A549 (cell line): ENCODE measurements at regions of chr17 and their contacts with region 1.

Region 1: DNA sequence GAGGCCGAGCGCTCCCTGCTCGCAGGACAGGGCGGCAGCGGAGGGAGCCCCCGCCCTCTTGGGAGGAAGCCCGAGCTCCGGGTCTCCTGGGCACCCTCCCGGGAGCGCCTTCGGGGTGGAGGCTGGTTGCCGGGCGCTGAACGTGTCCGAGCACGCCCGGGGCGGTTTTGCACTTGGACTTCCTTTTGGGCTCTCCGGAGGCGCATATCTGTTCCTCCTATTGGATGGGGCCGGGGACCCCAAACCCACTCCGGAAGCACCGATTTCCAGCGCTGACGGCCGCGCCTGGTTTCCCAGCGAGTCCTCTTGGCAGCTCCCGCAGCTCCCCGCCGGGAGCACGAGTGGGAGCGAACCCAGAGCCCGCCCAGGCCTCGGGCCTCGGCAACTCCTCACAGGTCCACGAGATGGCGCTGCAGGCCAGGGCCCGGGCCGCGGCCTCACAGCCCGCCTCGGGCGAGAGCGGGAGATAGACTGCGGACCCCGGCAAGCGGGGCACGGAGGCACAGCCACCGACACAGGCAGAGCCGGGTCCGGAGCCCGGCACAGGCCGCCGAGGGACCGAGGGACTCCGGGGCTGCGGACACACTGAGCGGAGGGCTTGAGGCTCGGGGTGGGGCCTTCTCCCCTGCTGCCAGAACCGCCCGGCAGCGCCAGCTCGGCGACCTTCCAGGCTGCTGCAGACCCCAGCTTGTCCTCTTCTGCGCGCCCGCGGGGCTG is 12.7 kb downstream of the TBX2 start:
- DNase-seq: peak; percentile 82 to 90
- ATAC-seq: peak; percentile 55 to 80
- H3K4me3 ChIP-seq: peak overlapping the region; percentile 58
- H3K27ac ChIP-seq: peak overlapping the region; percentile 85 to 91
- H3K4me1 ChIP-seq: peaks cover 15% of the 10 kb centered on the region
- CTCF ChIP-seq: peak; percentile 99
- EP300 ChIP-seq: no peak
- POLR2A ChIP-seq: peak; percentile 47
- RAD21 ChIP-seq: peak; percentile 98 to 100

Region 2: GRCh38 chr17:60971515-60972369 is 440.6 kb before region 1 on chr17:
- CTCF ChIA-PET with region 1: interaction called, 29 read pairs
- POLR2A ChIA-PET with region 1: no interaction called
- DNase-seq: peak; percentile 37 to 73
- ATAC-seq: peak; percentile 89 to 96
- H3K4me3 ChIP-seq: no peak overlapping the region
- H3K27ac ChIP-seq: no peak overlapping the region
- H3K4me1 ChIP-seq: peaks cover 7% of the 10 kb centered on the region; the same call in 1 of the 3 replicates
- CTCF ChIP-seq: peak; percentile 79
- EP300 ChIP-seq: no peak
- POLR2A ChIP-seq: no peak
- RAD21 ChIP-seq: peak; percentile 81 to 88

Region 3: DNA sequence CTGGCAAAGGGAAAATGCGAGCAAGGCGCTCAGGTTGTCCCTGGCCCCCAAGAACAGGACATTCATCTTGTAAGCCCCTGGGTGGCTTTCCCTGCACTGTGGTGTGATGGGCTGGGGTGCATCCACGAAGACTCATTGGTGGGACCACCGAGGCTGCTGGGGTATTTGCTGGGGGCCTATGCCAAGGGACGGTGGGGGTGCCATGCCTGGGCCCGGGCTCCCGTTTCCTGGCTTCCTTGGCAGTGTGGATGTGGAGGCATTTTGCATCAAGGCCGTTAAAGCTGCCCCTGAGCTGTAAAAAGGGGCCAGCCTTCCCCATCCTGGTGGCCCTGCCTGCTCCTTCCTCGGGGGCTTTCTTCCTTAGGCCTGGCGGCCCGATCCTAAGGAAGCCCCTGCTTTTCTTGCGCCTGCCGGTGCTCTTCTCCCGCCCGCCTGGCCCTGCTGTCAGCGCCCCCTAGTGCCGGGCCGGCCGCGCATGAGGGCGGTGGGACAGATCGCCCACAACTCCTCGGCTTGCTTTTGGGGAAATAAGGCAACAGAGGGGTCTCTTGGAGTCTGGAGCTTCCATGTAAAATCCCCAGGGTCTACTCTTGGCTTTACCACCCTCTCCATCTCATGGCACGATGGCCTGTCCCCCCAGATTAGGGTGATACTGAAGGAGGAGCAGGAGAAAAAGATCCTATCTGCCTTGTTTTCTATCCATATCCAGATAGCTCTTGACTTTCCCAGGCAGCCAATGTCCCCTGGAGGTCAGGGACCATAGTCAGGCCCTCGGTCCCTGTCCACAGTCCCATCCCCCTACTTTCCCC is 22.4 kb before region 1 on chr17:
- CTCF ChIA-PET with region 1: interaction called, 21 read pairs
- POLR2A ChIA-PET with region 1: no interaction called
- DNase-seq: peak; percentile 58 to 72
- ATAC-seq: peak; percentile 59 to 88
- H3K4me3 ChIP-seq: no peak overlapping the region
- H3K27ac ChIP-seq: peak overlapping the region; percentile 40 to 75; a peak in 5 of 6 replicates
- H3K4me1 ChIP-seq: peaks cover 7% of the 10 kb centered on the region; the same call in 2 of the 3 replicates
- CTCF ChIP-seq: peak; percentile 97
- EP300 ChIP-seq: no peak
- POLR2A ChIP-seq: no peak
- RAD21 ChIP-seq: peak; percentile 92 to 97

Region 4: DNA sequence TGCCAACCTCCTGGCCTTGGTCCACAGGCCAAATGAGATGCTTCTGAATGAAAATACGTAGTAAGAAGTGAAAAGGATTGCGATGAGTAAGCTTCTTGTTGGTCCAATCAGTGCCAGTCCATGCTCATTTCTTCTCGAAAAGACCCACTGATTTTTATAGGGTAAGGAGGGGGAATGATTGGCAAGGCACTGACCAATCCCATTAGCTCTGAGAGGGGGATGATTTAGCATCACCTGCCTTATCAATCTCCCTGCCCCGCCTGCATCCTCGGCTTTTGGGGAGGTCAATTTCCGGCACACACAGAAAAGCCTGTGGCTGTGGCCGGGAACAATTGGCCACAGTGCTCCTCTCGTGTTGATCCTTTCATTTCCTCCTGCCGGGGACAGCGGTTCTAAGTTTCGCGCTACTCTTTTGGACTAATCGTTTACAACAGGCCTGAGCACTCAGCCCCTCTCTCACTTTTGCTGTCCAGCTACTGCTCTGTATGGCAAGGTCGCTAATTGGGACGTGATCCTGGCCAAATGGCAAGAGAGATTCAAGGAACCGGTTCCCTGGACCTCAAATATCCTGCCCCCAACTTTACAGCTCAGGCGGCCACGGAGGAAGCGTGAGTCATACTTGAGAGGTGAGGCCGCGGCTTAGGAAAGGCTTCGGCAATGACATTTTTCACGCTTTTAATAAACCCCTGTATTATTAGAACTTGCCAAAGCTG is 83.0 kb after region 1 on chr17:
- CTCF ChIA-PET with region 1: interaction called, 10 read pairs
- POLR2A ChIA-PET with region 1: no interaction called
- DNase-seq: no peak
- ATAC-seq: no peak
- H3K4me3 ChIP-seq: no peak overlapping the region
- H3K27ac ChIP-seq: no peak overlapping the region
- H3K4me1 ChIP-seq: peaks cover 22% of the 10 kb centered on the region
- CTCF ChIP-seq: no peak
- EP300 ChIP-seq: no peak
- POLR2A ChIP-seq: no peak
- RAD21 ChIP-seq: no peak

Region 5: DNA sequence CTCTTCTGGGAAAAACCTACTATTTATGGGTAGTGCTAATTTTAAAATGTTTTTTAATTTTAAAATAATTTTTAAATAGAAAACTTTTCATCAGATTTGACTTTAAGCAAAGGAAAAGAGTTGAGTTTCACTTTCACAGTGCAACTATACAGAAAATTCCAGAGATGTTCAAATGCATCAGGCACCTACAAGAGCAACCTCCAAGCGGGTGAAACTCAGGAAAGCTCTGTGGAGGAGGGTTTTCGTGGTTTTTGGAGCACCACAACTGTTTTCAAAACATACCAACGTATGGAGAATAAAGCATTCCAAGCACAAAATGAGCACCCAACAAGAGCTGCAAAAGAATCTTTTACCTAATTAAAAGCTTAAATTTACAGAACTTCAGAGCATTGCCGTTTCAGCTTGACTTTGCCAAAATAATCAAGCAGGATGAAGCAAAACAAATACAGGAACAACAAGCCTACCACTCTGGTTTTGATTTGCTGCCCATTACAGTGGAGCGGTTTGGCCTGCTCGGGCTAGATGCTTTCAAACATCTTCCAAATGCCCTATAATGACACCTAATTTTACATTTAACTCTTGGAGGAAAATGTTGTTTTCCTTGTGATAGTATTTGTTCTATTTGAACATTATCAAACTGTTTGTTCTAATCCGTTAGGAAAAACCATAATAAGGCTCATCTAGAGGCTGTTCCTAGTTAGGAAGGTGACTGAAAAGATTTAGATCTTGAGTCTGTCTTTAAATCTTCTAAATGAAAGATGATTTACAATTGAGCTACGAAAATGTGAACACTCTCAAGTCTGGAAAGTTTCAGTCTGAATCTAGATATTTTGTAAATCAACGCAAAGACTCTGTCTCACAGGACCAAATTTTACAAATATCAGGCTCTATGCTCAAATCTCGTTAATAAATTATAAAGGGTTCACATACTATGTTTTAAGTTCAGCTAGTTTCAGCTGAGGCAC is 144.2 kb after region 1 on chr17:
- CTCF ChIA-PET with region 1: interaction called, 116 read pairs
- POLR2A ChIA-PET with region 1: no interaction called
- DNase-seq: no peak
- ATAC-seq: peak in 1 of 2 experiments; percentile 42; a peak in 1 of 6 replicates
- H3K4me3 ChIP-seq: peak overlapping the region; percentile 10; the same call in 1 of the 3 replicates
- H3K27ac ChIP-seq: peak overlapping the region; percentile 34 to 60
- H3K4me1 ChIP-seq: peaks cover 26% of the 10 kb centered on the region
- CTCF ChIP-seq: no peak
- EP300 ChIP-seq: no peak
- POLR2A ChIP-seq: no peak
- RAD21 ChIP-seq: no peak

Region 6: GRCh38 chr17:61583242-61583641 is 170.9 kb after region 1 on chr17:
- CTCF ChIA-PET with region 1: interaction called, 357 read pairs
- POLR2A ChIA-PET with region 1: interaction called, 7 read pairs
- DNase-seq: peak; percentile 73 to 79
- ATAC-seq: peak; percentile 96
- H3K4me3 ChIP-seq: no peak overlapping the region
- H3K27ac ChIP-seq: no peak overlapping the region
- H3K4me1 ChIP-seq: peaks cover 29% of the 10 kb centered on the region
- CTCF ChIP-seq: peak; percentile 72
- EP300 ChIP-seq: no peak
- POLR2A ChIP-seq: no peak
- RAD21 ChIP-seq: peak; percentile 56 to 58

Region 7: DNA sequence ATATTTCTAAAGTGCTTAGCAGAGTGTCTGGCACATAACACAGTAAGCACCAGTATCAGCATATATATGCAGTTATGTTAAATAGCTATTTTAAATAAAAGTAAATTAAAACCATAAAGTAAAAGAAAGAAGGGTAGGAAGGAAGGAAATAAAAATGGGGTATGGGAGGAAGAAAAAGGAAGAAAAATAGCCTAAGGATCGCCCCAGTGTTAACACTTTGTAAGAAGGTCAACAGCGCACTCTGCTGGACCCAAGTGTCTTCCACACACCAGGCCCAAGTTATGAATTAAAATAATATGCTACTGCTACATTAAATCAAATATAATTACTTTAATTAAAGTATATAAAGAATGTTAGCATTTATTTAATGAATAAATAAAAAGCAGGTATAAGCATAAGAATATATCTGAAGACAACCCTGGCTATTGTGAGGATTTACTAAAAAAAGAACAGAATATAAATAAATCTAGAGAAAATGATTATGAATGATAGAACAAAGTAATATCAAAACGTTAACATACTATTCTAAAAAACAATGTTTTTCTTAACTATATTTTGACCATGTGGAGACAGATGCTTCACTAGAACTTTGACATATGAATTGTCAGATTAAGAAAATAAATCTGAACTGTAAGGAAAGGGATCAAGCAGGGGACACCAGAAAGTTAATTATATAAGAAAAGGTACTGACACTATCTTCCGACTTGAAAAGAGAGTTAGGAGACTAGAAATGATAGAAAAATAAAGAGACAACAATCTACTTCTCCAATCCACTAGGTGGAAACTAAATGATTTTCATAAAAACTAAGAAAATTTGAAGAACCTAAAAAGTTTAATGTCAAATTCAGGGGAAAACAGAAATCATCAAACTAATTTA is 425.1 kb after region 1 on chr17:
- CTCF ChIA-PET with region 1: interaction called, 71 read pairs
- POLR2A ChIA-PET with region 1: interaction called, 4 read pairs
- DNase-seq: peak; percentile 58 to 80
- ATAC-seq: peak; percentile 82 to 92; a peak in 4 of 6 replicates
- H3K4me3 ChIP-seq: no peak overlapping the region
- H3K27ac ChIP-seq: no peak overlapping the region
- H3K4me1 ChIP-seq: peaks cover 23% of the 10 kb centered on the region
- CTCF ChIP-seq: peak; percentile 99
- EP300 ChIP-seq: no peak
- POLR2A ChIP-seq: no peak
- RAD21 ChIP-seq: peak; percentile 92 to 97